ENCODE measurements at regions of chr15 and their contacts with region 1.

Region 1: DNA sequence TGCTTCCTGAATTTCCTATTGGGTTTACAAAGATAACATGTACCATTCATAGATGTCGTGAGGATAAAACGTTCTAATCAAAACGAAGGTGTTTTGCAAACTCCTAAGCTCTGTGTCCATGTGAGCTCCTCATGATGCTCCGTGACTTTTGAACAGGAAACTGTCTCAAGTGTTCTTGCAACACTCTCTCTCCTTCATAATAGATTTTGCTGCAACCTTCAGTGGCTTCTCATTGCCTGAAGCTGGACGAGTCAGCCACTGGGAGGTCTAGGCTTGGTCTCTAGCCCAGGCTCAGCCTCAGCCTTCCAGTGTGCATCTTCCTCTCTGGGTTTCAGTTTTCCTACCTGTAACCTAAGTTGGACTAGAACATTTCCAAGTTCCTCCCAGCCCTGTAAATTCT is 18.7 kb upstream of the BCL2A1 start:
- DNase-seq: no peak
- ATAC-seq: no peak
- H3K4me3 ChIP-seq: no peak overlapping the region
- H3K27ac ChIP-seq: no peak overlapping the region
- H3K4me1 ChIP-seq: peaks cover 18% of the 10 kb centered on the region
- H3K27me3 ChIP-seq: no peaks in the 10 kb centered on the region
- CTCF ChIP-seq: no peak
- EP300 ChIP-seq: no peak
- POLR2A ChIP-seq: no peak
- RAD21 ChIP-seq: no peak

Region 2: DNA sequence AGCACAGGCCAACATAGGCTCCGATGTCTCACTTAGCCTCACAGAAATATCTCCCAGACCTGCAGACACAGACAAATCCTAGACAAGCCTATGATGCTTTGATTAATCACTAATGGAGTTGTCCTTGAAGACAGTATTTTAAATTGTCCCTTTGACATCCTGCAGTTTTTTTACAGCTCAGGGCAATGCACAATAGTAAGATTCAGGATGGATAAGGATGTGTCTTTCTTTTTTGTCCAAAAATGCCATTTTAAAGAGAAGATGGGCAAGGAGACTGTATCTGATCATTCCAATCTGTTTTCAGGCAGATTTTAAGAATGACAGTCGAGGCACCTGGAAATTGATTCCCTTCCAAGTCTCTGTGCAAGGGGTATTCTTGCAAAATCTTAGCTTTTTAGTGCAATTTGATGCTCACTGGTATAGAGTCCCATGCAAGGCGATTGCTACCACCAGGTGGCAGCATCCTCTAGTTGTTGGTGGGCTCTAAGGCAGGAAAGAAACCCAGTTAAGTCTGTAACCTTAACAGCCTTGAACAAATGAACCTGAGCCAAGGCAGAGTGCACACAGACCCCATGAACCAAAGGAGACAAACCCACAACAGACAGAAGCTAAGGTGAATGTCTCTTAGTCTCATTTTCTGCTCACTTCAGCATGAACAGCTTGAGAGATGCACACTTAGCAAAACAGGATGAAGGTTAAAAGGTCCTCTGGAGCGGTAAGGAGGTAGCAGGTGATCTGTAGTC is 608.8 kb before region 1 on chr15:
- CTCF ChIA-PET with region 1: interaction called, 15 read pairs
- POLR2A ChIA-PET with region 1: no interaction called
- RAD21 ChIA-PET with region 1: interaction called, 15 read pairs
- SMC1A ChIA-PET with region 1: interaction called, 3 read pairs
- in situ Hi-C with region 1: loop called (anchors 10 kb)
- intact Hi-C with region 1: loop called (anchors 2 kb)
- DNase-seq: peak; percentile 15
- ATAC-seq: peak; percentile 99
- H3K4me3 ChIP-seq: no peak overlapping the region
- H3K27ac ChIP-seq: no peak overlapping the region
- H3K4me1 ChIP-seq: no peaks in the 10 kb centered on the region
- H3K27me3 ChIP-seq: no peaks in the 10 kb centered on the region
- CTCF ChIP-seq: peak; percentile 82 to 89 (median 87)
- EP300 ChIP-seq: no peak
- POLR2A ChIP-seq: no peak
- RAD21 ChIP-seq: peak; percentile 88

Region 3: DNA sequence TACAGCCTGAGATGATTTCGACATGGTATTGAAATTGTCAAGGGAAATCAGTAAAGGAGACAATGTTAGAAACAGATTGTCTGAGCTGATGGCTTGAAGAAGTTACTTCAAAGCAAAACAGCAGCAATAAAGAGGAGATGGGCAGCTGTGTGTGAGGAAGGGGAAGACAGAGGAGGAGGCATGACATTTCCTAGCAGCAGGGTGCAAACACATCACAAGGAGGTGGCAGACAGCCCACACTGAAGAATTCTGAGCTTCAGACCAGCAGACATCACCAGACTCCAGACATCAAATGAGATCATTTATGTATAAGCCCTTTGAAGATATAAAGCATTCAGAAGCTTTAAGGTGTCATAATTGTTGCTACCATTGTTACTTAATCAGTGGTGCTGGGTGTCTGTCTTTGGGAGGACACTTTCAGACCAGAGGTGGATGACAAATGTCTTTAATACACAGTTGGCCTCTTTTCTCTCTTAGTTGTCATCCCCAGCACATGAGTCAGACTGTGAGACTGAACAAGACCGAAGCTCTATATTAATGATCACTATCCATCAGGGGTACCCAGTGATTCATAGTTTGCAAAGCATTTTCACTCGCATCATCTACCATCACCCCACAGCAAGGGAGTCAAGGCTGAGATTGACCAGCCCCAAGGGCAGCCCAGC is 353.7 kb before region 1 on chr15:
- CTCF ChIA-PET with region 1: no interaction called
- POLR2A ChIA-PET with region 1: no interaction called
- RAD21 ChIA-PET with region 1: no interaction called
- SMC1A ChIA-PET with region 1: no interaction called
- in situ Hi-C with region 1: no loop called
- intact Hi-C with region 1: no loop called
- DNase-seq: no peak
- ATAC-seq: no peak
- H3K4me3 ChIP-seq: no peak overlapping the region
- H3K27ac ChIP-seq: no peak overlapping the region
- H3K4me1 ChIP-seq: no peaks in the 10 kb centered on the region
- H3K27me3 ChIP-seq: no peaks in the 10 kb centered on the region; a peak in 1 of 4 replicates
- CTCF ChIP-seq: no peak
- EP300 ChIP-seq: no peak
- POLR2A ChIP-seq: no peak
- RAD21 ChIP-seq: no peak

Region 4: GRCh38 chr15:79779746-79780145 is 209.9 kb before region 1 on chr15:
- CTCF ChIA-PET with region 1: interaction called, 3 read pairs
- POLR2A ChIA-PET with region 1: no interaction called
- RAD21 ChIA-PET with region 1: no interaction called
- SMC1A ChIA-PET with region 1: no interaction called
- in situ Hi-C with region 1: loop called (anchors 10 kb)
- intact Hi-C with region 1: no loop called
- DNase-seq: peak; percentile 34
- ATAC-seq: peak; percentile 77
- H3K4me3 ChIP-seq: no peak overlapping the region
- H3K27ac ChIP-seq: no peak overlapping the region
- H3K4me1 ChIP-seq: peaks cover 13% of the 10 kb centered on the region
- H3K27me3 ChIP-seq: no peaks in the 10 kb centered on the region
- CTCF ChIP-seq: no peak
- EP300 ChIP-seq: no peak
- POLR2A ChIP-seq: no peak
- RAD21 ChIP-seq: no peak

Region 5: GRCh38 chr15:79896637-79897379 is 92.9 kb before region 1 on chr15 and contains the start of gene MTHFS:
- CTCF ChIA-PET with region 1: interaction called, 51 read pairs
- POLR2A ChIA-PET with region 1: interaction called, 9 read pairs
- RAD21 ChIA-PET with region 1: interaction called, 45 read pairs
- SMC1A ChIA-PET with region 1: interaction called, 27 read pairs
- in situ Hi-C with region 1: no loop called
- intact Hi-C with region 1: loop called (anchors 1 kb)
- DNase-seq: no peak
- ATAC-seq: peak; percentile 86
- H3K4me3 ChIP-seq: peak within 1 kb of the TSS; percentile 66
- H3K27ac ChIP-seq: peak within 1 kb of the TSS; percentile 85
- H3K4me1 ChIP-seq: peaks cover 16% of the 10 kb centered on the region
- H3K27me3 ChIP-seq: no peaks in the 10 kb centered on the region
- CTCF ChIP-seq: peak; percentile 44 to 62 (median 54)
- EP300 ChIP-seq: 0 out of 4 replicates have a peak, but pooled peaks of 1 of the 2 experiments have one; percentile 26
- POLR2A ChIP-seq: peak; percentile 94
- RAD21 ChIP-seq: peak; percentile 57
- polyA plus RNA-seq, gene MTHFS: 14.0 to 24.5 TPM

Region 6: DNA sequence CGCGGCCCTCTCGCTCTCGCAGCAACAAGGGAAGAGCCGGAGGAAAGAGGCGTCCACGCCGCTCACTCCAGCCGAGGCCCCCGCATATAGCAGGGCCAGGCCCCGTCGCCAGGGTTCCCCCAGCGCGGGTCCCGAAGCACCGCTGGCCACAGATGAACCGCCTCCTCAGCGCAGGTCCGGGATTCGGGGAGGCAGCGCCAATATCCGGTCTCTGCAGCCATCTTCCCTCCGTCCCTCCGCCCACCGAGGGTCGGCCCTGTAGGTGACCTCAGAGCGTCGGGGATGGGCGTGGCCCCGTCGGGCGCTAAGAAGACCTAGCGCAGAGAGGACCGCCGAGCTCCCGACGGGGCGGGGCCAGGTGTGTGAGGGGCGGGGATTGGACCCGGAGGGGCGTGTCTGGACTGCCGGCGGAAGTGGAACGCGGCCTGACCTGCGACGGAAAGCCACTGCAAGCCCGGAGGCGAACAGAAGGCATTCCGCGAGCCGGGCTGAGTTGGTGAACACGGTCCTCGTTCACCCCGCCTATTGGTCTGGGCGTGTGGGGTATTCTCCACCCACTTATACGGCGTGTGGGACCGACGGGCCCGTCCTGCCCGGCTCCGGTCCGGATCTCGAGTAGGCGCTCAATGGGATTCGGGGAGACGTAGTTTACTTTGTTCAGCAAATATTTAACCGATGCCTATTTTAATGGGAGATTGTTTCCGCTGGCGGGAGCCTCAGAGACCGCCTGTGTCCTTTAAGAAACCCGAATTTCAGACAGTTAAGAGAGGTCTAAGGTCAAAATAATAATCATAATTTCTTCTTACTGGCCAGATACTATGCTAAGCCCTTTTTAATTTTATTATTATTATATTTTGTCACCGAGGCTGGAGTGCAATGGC is 65.9 kb before region 1 on chr15:
- CTCF ChIA-PET with region 1: interaction called, 11 read pairs
- POLR2A ChIA-PET with region 1: interaction called, 13 read pairs
- RAD21 ChIA-PET with region 1: interaction called, 3 read pairs
- SMC1A ChIA-PET with region 1: interaction called, 7 read pairs
- in situ Hi-C with region 1: no loop called
- intact Hi-C with region 1: no loop called
- DNase-seq: peak; percentile 94
- ATAC-seq: peak; percentile 97
- H3K4me3 ChIP-seq: peak overlapping the region; percentile 80
- H3K27ac ChIP-seq: peak overlapping the region; percentile 92
- H3K4me1 ChIP-seq: no peaks in the 10 kb centered on the region
- H3K27me3 ChIP-seq: no peaks in the 10 kb centered on the region
- CTCF ChIP-seq: no peak
- EP300 ChIP-seq: no peak
- POLR2A ChIP-seq: peak; percentile 94
- RAD21 ChIP-seq: 0 out of 2 replicates have a peak, but pooled peaks have one; percentile 2

Region 7: DNA sequence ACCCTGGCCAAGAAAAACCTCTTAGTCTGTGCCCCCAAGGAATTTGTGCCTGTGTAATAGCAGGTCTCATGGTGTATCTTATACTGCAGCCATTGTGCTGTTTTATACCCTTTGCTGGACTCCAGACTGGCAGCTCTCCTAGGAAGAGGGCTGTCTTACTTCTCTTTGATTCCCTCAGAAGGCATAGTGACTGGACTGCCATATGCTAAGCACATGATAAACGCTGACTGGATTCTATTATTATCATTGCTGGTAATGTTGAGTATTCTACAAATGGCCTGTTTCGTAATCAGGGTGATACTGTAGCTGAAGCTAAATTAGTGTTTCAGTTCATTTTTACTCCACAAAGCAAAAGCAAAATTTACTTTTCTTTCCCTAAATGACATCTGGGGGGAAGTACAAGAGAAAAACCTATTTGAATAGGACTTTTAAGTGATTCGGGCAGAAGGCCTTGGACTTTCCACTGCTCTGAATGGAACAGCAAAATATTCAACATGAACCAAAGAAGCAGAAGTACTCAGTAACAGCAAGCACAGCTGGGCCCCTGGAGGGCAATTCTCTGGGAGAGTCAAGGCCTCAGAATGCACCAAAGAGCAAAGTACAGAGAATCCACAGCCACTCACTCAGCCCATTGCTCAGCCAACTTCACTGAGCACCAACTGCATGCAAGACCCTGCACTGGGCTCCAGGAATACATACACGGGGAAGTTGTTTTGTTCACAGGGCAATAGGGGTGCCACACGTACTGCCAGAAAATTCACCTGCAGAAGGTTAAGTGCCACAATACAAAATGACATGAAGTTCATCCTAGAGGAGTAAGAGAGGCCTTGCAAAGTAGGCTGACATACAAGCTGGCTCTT is 10.8 kb before region 1 on chr15:
- CTCF ChIA-PET with region 1: interaction called, 30 read pairs
- POLR2A ChIA-PET with region 1: interaction called, 10 read pairs
- RAD21 ChIA-PET with region 1: interaction called, 18 read pairs
- SMC1A ChIA-PET with region 1: interaction called, 20 read pairs
- in situ Hi-C with region 1: no loop called
- intact Hi-C with region 1: no loop called
- DNase-seq: peak; percentile 95
- ATAC-seq: peak; percentile 74
- H3K4me3 ChIP-seq: peak overlapping the region; percentile 47; the same call in 1 of the 2 replicates
- H3K27ac ChIP-seq: peak overlapping the region; percentile 99
- H3K4me1 ChIP-seq: peaks cover 71% of the 10 kb centered on the region
- H3K27me3 ChIP-seq: no peaks in the 10 kb centered on the region
- CTCF ChIP-seq: no peak
- EP300 ChIP-seq: peak; percentile 78 to 87; a peak in 2 of 4 replicates
- POLR2A ChIP-seq: no peak
- RAD21 ChIP-seq: peak; percentile 19; the same call in 1 of the 2 replicates

Region 8: DNA sequence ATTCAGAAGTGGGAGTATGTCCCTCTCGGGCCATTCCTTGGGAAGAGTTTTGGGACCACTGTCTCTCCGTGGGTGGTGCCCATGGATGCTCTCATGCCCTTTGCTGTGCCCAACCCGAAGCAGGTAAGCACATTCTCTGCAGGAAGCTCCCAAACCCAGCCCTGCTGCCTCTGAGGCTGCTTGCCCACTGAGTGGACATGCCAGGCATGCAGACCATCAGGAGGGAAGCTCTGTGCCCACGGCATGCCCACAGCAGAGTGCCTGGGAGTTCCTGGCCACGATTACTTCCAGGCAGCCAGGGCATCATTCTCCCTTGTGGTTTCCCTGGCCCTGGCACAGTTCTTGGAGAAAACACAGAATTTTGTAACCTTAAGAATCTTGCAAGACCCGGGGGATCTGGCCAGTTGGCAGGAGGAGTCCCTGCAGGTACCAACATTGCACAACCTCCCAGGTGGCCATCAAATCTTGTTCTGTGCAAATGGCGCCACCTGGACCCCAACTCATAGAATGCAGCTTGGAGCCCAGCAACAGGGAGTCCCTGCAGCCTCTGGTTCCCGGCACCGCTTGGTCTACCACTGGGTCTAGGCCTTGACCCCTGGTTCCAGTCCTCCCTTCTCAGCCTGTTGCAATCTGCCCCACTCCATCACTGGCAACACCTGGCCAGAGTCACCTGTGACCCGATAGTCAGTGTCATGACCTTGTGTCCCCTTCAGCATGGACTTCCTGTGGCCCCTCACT is 183.5 kb after region 1 on chr15:
- CTCF ChIA-PET with region 1: interaction called, 18 read pairs
- POLR2A ChIA-PET with region 1: interaction called, 3 read pairs
- RAD21 ChIA-PET with region 1: interaction called, 3 read pairs
- SMC1A ChIA-PET with region 1: interaction called, 8 read pairs
- in situ Hi-C with region 1: no loop called
- intact Hi-C with region 1: loop called (anchors 2 kb)
- DNase-seq: no peak
- ATAC-seq: peak; percentile 99
- H3K4me3 ChIP-seq: no peak overlapping the region
- H3K27ac ChIP-seq: no peak overlapping the region
- H3K4me1 ChIP-seq: no peaks in the 10 kb centered on the region; the same call in 1 of the 2 replicates
- H3K27me3 ChIP-seq: no peaks in the 10 kb centered on the region
- CTCF ChIP-seq: peak; percentile 80 to 84 (median 81)
- EP300 ChIP-seq: no peak
- POLR2A ChIP-seq: no peak
- RAD21 ChIP-seq: peak; percentile 96

Region 9: DNA sequence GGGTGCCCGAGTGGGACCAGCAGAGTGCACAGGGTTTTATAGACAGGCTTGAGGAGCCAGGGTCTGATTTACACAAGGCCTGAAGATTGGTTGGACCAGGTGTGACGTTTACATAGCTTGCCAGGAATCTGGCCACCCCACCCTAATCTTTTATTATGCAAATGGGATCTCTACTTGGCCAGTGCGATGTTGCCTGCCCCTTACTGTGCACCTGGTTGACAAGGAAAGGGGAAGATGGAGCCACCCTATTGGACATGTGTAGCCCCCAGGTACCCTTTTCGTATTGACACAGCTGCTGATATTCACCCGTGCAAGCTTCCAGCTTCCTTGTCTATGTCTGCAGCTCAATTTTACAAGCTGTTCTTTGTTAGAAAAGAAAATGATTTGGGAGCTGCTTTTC is 546.5 kb after region 1 on chr15:
- CTCF ChIA-PET with region 1: no interaction called
- POLR2A ChIA-PET with region 1: no interaction called
- RAD21 ChIA-PET with region 1: no interaction called
- SMC1A ChIA-PET with region 1: no interaction called
- in situ Hi-C with region 1: no loop called
- intact Hi-C with region 1: no loop called
- DNase-seq: no peak
- ATAC-seq: no peak
- H3K4me3 ChIP-seq: no peak overlapping the region
- H3K27ac ChIP-seq: no peak overlapping the region
- H3K4me1 ChIP-seq: no peaks in the 10 kb centered on the region
- H3K27me3 ChIP-seq: no peaks in the 10 kb centered on the region; a peak in 1 of 4 replicates
- CTCF ChIP-seq: no peak
- EP300 ChIP-seq: no peak
- POLR2A ChIP-seq: no peak
- RAD21 ChIP-seq: no peak